ENCODE measurements at regions of chr12 and their contacts with region 1.

Region 1: DNA sequence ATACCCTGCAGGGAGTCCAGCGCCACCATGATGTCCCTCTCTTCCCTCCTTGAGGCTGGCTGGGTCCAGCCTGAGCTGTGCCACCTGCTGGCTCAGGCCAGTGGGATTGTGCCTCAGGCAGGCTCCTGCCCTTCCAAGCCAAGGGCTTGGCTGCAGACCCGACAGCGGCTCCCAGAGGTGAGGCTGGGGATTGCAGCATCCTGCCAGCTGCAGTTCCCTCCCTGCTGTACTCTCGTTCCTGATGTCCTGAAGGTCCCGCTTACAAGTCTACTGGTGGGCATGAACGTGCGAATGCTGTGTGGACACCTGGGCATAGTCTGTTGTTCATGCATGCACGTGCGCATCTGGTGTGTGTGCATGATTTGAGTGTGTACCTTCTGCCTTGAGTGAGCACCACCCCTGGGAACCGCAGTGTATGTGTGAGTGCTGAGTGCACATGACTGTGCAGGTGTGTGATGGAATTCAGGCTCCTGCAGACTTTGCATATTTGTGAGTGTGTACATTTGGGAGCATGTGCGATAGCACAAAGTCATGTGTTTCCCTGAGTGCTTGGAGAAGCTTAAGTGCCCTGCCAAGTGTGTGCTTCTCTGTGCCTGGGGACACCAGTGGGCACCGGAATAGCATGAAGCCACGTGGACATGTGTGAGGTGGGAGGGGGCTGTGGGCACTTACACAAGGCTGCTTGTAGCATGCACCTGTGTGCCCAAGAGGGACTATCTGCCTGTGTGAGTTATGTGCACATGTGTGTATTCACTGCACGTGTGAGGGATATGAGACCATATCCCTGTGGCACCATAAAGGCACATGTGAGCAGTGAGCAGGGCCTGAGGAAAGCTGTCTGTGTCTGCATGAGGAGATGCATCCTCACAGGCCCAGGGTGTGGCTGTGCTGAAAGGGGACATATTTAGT is 19.3 kb upstream of the KRT7 start:
- DNase-seq: peak; percentile 61 to 78 (median 67)
- H3K4me3 ChIP-seq: no peak overlapping the region
- H3K27ac ChIP-seq: no peak overlapping the region
- H3K4me1 ChIP-seq: no peaks in the 10 kb centered on the region
- H3K27me3 ChIP-seq: peaks cover 0 to 7% (median 0%) of the 10 kb centered on the region in 5 experiments

Region 2: DNA sequence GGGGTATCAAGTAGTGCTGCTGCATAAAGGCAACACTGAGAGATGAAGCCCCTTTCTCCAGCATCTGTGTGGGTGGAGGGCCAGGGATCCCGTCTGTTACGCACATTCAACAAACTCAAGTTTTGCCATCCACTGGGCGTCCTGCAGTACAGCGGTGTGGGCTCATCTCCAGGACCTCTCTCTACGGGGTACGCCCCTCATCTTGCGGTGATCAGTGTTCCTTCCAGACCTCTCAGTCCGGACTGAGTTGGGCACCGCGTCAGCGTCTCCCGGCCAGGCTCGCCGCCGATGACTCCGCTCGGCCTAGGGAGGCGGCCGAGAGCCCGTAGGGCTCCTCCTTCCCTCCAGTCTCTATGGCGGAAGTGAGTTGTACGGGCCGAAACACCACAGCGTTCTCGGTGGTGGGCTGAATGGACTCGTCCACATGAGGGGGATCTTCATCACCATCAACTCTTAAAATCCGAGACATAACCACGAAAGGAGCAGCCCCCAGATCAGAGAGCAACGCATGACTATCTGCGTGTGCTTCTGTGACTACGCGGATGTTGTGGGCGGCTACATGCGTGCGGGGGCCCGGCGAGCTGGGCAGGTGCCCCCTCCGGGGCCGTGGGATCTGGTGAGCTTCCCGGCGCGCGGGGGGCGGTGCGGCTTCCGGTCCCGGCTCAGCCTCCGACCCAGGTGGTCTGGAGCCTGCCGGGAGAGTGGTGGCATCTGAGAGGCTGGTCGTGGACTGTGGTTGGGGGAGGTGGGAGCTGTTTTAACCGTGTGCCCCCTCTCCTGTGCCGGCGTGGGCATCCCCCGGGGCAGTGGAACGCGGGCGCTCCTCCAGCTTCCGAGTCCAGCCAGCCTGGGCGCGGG is 144.2 kb before region 1 on chr12 and contains the start of gene ATG101:
- CTCF ChIA-PET with region 1: no interaction called
- POLR2A ChIA-PET with region 1: no interaction called
- DNase-seq: peak; percentile 96 to 98 (median 97)
- H3K4me3 ChIP-seq: peak within 1 kb of the TSS; percentile 69 to 99 (median 93)
- H3K27ac ChIP-seq: peak within 1 kb of the TSS; percentile 95 to 98
- H3K4me1 ChIP-seq: peaks cover 4 to 19% (median 18%) of the 10 kb centered on the region in 4 experiments
- H3K27me3 ChIP-seq: no peaks in the 10 kb centered on the region

Region 3: DNA sequence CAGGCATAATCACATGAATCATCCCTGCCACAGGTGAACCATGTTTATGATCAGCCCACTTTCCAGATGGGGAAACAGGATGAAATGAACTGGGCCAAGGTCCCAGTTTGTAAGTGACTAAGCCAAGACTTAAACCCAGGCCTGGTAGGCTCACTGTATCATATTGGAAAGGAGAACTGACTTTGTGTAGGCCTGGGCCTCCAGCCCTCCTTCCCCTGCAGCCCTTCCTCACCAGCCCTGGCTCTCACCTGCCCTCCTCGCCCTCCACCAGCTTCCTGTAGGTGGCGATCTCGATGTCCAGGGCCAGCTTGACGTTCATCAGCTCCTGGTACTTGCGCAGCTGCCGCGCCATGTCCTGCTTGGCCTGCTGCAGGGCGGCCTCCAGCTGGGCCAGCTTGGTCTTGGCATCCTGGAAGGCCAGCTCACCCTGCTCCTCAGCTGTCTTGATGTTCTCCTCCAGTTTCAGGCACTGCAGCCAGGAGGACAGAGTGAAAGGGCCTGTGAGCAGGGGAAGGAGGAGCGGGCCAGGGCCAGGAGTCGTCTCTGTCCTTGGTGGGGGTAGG is 41.7 kb before region 1 on chr12:
- CTCF ChIA-PET with region 1: interaction called, 73 read pairs
- POLR2A ChIA-PET with region 1: no interaction called
- DNase-seq: peak in 2 of 3 donors; percentile 38 to 43
- H3K4me3 ChIP-seq: no peak overlapping the region
- H3K27ac ChIP-seq: no peak overlapping the region
- H3K4me1 ChIP-seq: peaks cover 0 to 12% (median 4%) of the 10 kb centered on the region in 4 experiments
- H3K27me3 ChIP-seq: no peaks in the 10 kb centered on the region

Region 4: DNA sequence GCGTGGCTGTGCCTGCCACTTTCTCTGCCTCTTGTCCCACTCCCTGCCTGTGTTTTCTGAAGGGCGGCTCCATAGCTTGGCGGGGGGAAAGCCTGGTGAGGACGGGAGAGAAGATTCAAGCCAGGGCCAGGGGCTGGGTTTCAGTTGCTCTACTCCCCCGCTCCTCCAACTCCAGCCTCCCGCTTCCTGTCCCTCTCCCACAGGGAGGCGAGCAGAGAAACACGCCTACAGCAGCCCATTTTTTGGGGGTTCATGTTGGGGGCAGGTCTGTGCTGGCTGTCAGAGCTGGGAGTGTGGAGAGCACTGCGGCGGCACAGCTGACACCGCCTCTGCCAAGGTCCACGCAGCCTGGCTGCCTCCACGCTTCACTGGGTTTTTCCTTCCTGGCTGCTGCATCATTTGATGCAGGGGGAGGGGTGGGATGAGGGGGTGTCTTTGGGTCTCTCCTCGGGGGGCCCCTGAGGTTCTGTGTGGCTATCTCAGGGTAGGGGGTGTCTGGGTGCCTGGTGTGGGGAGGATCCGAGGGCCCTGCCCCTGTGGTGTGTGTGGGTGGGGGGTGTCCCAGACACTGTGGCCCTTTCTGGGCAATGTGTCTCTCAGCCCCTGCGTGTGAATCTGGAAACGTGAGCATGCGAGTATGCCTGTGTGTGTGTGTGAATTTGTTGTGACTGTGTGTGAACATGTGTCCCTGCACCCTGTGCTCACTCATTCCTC is 11.2 kb before region 1 on chr12:
- CTCF ChIA-PET with region 1: interaction called, 21 read pairs
- POLR2A ChIA-PET with region 1: no interaction called
- DNase-seq: no peak
- H3K4me3 ChIP-seq: no peak overlapping the region
- H3K27ac ChIP-seq: no peak overlapping the region
- H3K4me1 ChIP-seq: peaks cover 4 to 45% (median 39%) of the 10 kb centered on the region in 4 experiments
- H3K27me3 ChIP-seq: peaks cover 0 to 10% (median 0%) of the 10 kb centered on the region in 5 experiments

Region 5: DNA sequence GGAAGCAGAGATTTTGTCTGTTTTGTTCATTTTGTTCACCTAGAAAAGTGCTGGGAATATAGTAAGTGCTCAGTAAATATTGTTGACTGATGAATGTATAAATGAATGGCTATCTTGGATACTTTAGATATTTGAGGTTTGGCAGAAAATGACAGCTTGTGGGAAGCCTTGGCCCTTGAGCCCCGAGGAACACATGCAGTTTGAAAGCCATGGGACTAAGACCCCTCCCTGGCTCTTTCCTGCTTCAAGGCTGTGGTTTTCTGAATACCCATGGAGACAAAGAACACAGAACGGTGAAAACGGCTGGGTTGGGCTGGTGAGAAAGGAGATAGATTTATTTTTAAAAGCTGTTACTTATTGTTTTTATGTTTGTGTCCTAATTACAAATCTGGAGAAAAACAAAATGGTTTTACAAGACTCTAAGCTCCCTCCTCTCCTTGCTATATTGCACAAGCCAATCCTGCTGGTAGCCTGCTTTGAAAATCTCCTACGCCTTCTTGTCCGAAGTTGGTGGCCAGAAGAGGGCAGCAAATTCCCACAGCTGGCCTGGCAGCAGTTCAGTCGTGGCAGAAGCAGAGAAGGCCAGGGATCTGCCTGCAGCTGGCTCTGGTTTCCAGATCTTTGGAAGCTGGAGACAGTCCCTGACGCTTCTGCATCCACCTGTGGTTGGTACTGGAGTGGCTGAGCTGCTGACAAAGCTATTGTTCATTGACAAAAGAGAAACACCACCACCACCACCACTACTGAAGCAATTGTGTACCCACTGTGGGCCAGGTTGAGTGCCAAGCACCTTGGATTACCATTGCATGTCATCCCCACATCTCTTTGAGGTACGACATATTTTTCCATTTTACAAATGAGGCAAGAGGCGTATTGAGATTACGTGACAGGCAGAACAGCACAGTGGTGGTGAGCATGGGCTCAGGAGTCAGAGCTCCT is 158.7 kb after region 1 on chr12:
- CTCF ChIA-PET with region 1: no interaction called
- POLR2A ChIA-PET with region 1: no interaction called
- DNase-seq: peak; percentile 78 to 90 (median 86)
- H3K4me3 ChIP-seq: no peak overlapping the region
- H3K27ac ChIP-seq: no peak overlapping the region
- H3K4me1 ChIP-seq: no peaks in the 10 kb centered on the region
- H3K27me3 ChIP-seq: peaks cover 0 to 7% (median 5%) of the 10 kb centered on the region in 5 experiments